PC-3 (cell line): ENCODE measurements at regions of chr22 and their contacts with region 1.

Region 1: GRCh38 chr22:22099833-22100812 is 117.5 kb upstream of the TOP3B start:
- DNase-seq: peak; percentile 39
- ATAC-seq: peak; percentile 81
- H3K4me3 ChIP-seq: no peak overlapping the region
- H3K27ac ChIP-seq: no peak overlapping the region
- H3K4me1 ChIP-seq: no peaks in the 10 kb centered on the region
- H3K27me3 ChIP-seq: peaks cover 19% of the 10 kb centered on the region
- CTCF ChIP-seq: peak; percentile 60

Region 2: GRCh38 chr22:22144858-22145257 is 44.7 kb after region 1 on chr22:
- CTCF ChIA-PET with region 1: no interaction called
- POLR2A ChIA-PET with region 1: no interaction called
- intact Hi-C with region 1: loop called (anchors 10 kb)
- DNase-seq: peak; percentile 27
- ATAC-seq: no peak
- H3K4me3 ChIP-seq: no peak overlapping the region
- H3K27ac ChIP-seq: no peak overlapping the region
- H3K4me1 ChIP-seq: no peaks in the 10 kb centered on the region
- H3K27me3 ChIP-seq: peaks cover 64% of the 10 kb centered on the region
- CTCF ChIP-seq: peak; percentile 37; the same call in 1 of the 2 replicates

Region 3: DNA sequence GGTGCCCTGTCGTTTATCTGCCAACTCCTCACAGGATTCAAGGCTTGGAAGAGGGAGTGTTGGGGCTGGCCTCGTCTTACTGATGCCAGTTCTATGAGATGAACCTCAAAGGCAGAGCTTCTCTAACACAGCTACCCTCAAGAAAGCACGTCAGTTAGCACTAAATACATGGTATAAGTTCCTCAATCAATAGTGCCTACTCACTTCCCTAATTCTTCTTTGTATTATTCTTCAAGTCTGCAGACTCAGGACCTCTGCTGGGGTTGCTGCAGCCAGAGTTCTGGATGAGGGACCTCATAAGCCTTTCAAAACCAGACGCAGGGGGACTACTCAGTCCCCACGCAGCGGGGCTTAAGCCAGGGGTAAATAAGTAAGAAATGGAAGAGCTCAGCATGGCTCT is 262.8 kb after region 1 on chr22:
- CTCF ChIA-PET with region 1: no interaction called
- POLR2A ChIA-PET with region 1: no interaction called
- intact Hi-C with region 1: no loop called
- DNase-seq: no peak
- ATAC-seq: no peak
- H3K4me3 ChIP-seq: no peak overlapping the region
- H3K27ac ChIP-seq: no peak overlapping the region
- H3K4me1 ChIP-seq: no peaks in the 10 kb centered on the region
- H3K27me3 ChIP-seq: peaks cover 10% of the 10 kb centered on the region
- CTCF ChIP-seq: no peak